ENCODE measurements at regions of chr15 and their contacts with region 1.

Region 1: DNA sequence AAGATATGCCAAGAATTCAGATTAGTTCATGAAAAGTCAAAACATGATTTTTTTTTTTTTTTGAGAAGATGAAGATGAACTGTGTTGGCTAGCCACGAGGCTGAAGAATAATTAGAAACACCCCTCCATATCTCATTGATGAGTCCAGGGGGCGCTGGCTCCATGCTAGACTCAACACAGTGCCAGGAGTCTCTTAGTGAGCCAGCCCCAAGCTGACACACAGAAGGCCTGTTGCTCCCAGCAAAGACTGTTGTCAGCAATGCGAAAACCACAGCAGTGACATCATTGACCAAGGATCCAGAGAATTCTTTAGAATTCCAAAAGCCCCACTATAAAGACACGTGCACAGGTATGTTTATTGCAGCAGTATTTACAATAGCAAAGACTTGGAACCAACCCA is 185.2 kb downstream of the ANXA2 start:
- DNase-seq: peak; percentile 10
- H3K4me3 Mint-ChIP-seq: no peak overlapping the region
- H3K27ac Mint-ChIP-seq: no peak overlapping the region
- H3K4me1 Mint-ChIP-seq: peaks cover 14% of the 10 kb centered on the region
- H3K27me3 Mint-ChIP-seq: peaks cover 90% of the 10 kb centered on the region
- CTCF ChIP-seq: no peak

Region 2: DNA sequence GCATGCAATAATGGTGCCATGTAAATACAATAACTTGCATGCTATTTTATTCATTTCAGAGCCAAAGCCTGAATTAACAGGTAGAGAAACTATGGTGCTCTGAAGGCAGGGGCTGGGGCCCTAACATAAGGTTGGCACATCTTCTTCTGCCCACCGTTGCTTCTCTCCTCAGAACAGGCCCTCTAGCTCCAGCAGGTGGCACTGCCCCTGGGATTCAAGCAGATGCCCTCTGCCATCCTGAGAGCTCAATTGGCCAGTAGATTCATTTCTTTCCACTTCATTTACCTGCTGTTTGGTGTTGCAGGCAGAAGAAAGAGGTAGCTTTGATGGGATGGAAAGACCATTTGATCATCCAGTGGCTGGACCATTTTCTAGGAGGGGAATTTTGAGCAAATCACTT is 77.9 kb before region 1 on chr15:
- CTCF ChIA-PET with region 1: no interaction called
- intact Hi-C with region 1: no loop called
- DNase-seq: peak; percentile 55
- H3K4me3 Mint-ChIP-seq: no peak overlapping the region
- H3K27ac Mint-ChIP-seq: no peak overlapping the region
- H3K4me1 Mint-ChIP-seq: no peaks in the 10 kb centered on the region
- H3K27me3 Mint-ChIP-seq: peaks cover 35% of the 10 kb centered on the region
- CTCF ChIP-seq: peak; percentile 58

Region 3: GRCh38 chr15:60172143-60172542 is 40.4 kb before region 1 on chr15:
- CTCF ChIA-PET with region 1: interaction called, 10 read pairs
- intact Hi-C with region 1: no loop called
- DNase-seq: no peak
- H3K4me3 Mint-ChIP-seq: no peak overlapping the region
- H3K27ac Mint-ChIP-seq: no peak overlapping the region
- H3K4me1 Mint-ChIP-seq: no peaks in the 10 kb centered on the region
- H3K27me3 Mint-ChIP-seq: peaks cover 27% of the 10 kb centered on the region
- CTCF ChIP-seq: no peak

Measured in Calu3 (cell line).